Activated naive CD4-positive, alpha-beta T cell treated with anti-CD3 and anti-CD28 coated beads for 36 hours (primary cell): ENCODE measurements at regions of chr6 and their contacts with region 1.

Region 1: DNA sequence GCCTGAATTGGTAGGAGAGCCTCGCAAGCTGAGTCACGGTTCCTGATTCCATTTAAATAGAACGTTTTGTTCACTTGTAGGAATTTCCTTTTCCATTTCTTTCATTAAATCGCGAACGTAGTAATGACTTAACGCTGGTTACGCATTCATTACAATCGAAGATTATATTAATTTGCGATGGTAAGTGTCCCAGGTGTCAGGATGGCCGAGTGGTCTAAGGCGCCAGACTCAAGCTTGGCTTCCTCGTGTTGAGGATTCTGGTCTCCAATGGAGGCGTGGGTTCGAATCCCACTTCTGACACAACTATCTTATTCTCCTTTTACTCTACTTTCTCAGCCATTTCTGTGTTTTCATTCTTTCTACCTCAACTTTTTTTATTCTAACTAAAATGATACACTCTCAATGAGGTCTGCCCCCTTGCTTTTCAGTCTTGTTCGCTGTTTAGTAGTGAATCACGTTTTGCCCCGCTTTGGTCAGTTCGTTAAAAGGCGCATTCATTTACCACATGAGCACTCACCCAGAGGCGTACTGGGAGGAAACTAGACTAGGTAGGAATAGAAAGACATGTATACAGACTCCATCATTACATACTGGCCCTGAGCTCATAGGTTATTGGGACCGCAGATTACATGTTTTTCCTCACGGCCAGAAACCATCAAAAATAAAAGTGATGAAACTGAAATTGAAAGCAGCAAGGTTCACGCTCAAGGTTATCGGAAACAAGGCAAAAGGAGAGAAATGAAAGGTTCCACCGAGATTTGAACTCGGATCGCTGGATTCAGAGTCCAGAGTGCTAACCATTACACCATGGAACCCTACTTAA is 17.3 kb upstream of the TRIM27 start:
- DNase-seq: peak; percentile 87
- H3K4me3 Mint-ChIP-seq: peak overlapping the region; percentile 93
- H3K27ac Mint-ChIP-seq: peak overlapping the region; percentile 99
- H3K4me1 Mint-ChIP-seq: peaks cover 40% of the 10 kb centered on the region
- H3K27me3 Mint-ChIP-seq: no peaks in the 10 kb centered on the region

Region 2: GRCh38 chr6:27503436-27504030 is 1437.5 kb before region 1 on chr6:
- CTCF ChIA-PET with region 1: no interaction called
- intact Hi-C with region 1: loop called (anchors 10 kb)
- DNase-seq: peak; percentile 88
- H3K4me3 Mint-ChIP-seq: peak overlapping the region; percentile 90
- H3K27ac Mint-ChIP-seq: peak overlapping the region; percentile 86
- H3K4me1 Mint-ChIP-seq: peaks cover 24% of the 10 kb centered on the region
- H3K27me3 Mint-ChIP-seq: peaks cover 1% of the 10 kb centered on the region

Region 3: DNA sequence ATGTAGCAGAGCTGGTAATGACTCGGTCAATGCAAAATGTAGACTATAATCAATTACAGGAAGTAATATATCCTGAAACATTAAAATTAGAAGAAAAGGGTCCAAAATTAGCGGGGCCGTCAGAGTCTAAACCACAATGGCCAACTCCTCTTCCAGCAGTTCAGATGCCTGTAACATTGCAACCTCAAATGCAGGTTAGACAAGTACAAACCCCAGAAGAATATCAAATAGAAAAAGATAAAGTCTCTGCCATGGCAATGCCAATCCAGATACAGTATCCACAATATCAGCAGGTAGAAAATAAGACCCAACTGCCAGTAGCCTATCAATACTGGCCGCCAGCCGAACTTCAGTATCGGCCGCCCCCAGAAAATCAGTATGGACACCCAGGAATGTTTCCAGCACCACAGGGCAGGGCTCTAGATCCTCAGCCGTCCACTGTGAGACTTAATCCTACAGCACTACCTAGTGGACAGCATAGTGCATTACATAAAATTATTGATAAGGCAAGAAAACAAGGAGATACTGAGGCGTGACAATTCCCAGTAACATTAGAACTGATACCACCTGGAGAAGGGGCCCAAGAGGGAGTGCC is 257.0 kb before region 1 on chr6:
- CTCF ChIA-PET with region 1: no interaction called
- intact Hi-C with region 1: loop called (anchors 2 kb)
- DNase-seq: no peak
- H3K4me3 Mint-ChIP-seq: no peak overlapping the region
- H3K27ac Mint-ChIP-seq: no peak overlapping the region
- H3K4me1 Mint-ChIP-seq: peaks cover 5% of the 10 kb centered on the region
- H3K27me3 Mint-ChIP-seq: peaks cover 73% of the 10 kb centered on the region

Region 4: GRCh38 chr6:28880894-28881780 is 59.9 kb before region 1 on chr6:
- CTCF ChIA-PET with region 1: no interaction called
- intact Hi-C with region 1: loop called (anchors 1 kb)
- DNase-seq: peak; percentile 86
- H3K4me3 Mint-ChIP-seq: peak overlapping the region; percentile 76
- H3K27ac Mint-ChIP-seq: peak overlapping the region; percentile 83
- H3K4me1 Mint-ChIP-seq: peaks cover 36% of the 10 kb centered on the region
- H3K27me3 Mint-ChIP-seq: peaks cover 5% of the 10 kb centered on the region

Region 5: GRCh38 chr6:28907394-28907793 is 33.7 kb before region 1 on chr6:
- CTCF ChIA-PET with region 1: no interaction called
- intact Hi-C with region 1: no loop called
- DNase-seq: no peak
- H3K4me3 Mint-ChIP-seq: no peak overlapping the region
- H3K27ac Mint-ChIP-seq: no peak overlapping the region
- H3K4me1 Mint-ChIP-seq: no peaks in the 10 kb centered on the region
- H3K27me3 Mint-ChIP-seq: no peaks in the 10 kb centered on the region

Region 6: GRCh38 chr6:28953039-28953584 is 12.0 kb after region 1 on chr6:
- CTCF ChIA-PET with region 1: no interaction called
- intact Hi-C with region 1: loop called (anchors 1 kb)
- DNase-seq: peak; percentile 75
- H3K4me3 Mint-ChIP-seq: peak overlapping the region; percentile 83
- H3K27ac Mint-ChIP-seq: peak overlapping the region; percentile 58
- H3K4me1 Mint-ChIP-seq: peaks cover 16% of the 10 kb centered on the region
- H3K27me3 Mint-ChIP-seq: peaks cover 11% of the 10 kb centered on the region

Region 7: GRCh38 chr6:30066577-30067459 is 1125.7 kb after region 1 on chr6 and contains the start of gene PPP1R11:
- CTCF ChIA-PET with region 1: no interaction called
- intact Hi-C with region 1: loop called (anchors 10 kb)
- DNase-seq: peak; percentile 99
- H3K4me3 Mint-ChIP-seq: peak within 1 kb of the TSS; percentile 90
- H3K27ac Mint-ChIP-seq: peak within 1 kb of the TSS; percentile 96
- H3K4me1 Mint-ChIP-seq: peaks cover 48% of the 10 kb centered on the region
- H3K27me3 Mint-ChIP-seq: peaks cover 7% of the 10 kb centered on the region
- total RNA-seq, gene PPP1R11: 42.8 to 46.6 TPM